GM18951 (cell line): ENCODE measurements at regions of chr10 and their contacts with region 1.

Region 1: GRCh38 chr10:63164166-63164623 is 31.1 kb downstream of the NRBF2 start:
- POLR2A ChIP-seq: no peak

Region 2: DNA sequence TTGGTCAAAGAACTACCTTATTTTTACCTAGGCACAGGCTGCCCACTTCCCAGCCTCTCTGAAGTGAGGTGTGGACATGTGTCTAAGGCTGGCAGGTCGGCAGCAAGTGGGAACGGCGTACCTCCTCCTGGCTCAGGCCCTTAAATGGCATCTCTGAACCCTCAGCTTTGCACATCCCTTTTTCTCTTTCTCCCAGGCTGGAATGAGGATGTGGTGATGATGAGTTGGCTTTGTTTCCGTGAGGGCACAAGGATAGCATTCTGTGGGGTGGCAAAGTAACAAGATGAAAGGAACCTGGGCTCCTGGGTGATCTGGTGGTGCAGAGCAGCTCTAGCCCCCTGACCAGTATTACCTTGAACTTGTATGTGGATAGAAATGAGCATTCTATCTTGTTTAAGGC is 553.8 kb after region 1 on chr10:
- in situ Hi-C with region 1: loop called (anchors 5 kb)
- POLR2A ChIP-seq: no peak